Activated CD8-positive, alpha-beta memory T cell treated with anti-CD3 and anti-CD28 coated beads, Interleukin-2, amount 10 ng/mL, durations not matched to agents 7 days and 5 days (primary cell): ENCODE measurements at regions of chr16 and their contacts with region 1.

Region 1: GRCh38 chr16:81035398-81035974 is at the start of gene ATMIN:
- DNase-seq: peak; percentile 87
- ATAC-seq: peak; percentile 97
- H3K4me3 Mint-ChIP-seq: peak within 1 kb of the TSS; percentile 79
- H3K27ac Mint-ChIP-seq: peak within 1 kb of the TSS; percentile 65
- H3K4me1 Mint-ChIP-seq: peaks cover 20% of the 10 kb centered on the region
- H3K27me3 Mint-ChIP-seq: no peaks in the 10 kb centered on the region
- total RNA-seq, gene ATMIN: 20.9 to 27.5 TPM

Region 2: DNA sequence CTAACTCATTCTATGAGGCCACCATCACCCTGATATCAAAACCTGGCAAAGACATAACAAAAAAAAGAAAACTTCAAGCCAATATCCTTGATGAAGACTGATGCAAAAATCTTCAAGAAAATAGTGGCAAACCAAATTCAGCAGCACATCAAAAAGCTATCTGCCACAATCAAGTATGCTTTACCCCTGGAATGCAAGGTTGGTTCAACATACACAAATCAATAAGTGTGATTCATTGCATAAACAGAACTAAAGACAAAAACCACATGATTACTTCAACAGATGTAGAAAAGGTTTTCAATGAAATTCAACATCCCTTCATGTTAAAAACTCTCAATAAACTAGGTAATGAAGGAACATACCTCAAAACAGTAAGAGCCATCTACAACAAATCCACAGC is 77.2 kb before region 1 on chr16:
- CTCF ChIA-PET with region 1: no interaction called
- DNase-seq: no peak
- ATAC-seq: no peak
- H3K4me3 Mint-ChIP-seq: no peak overlapping the region
- H3K27ac Mint-ChIP-seq: no peak overlapping the region
- H3K4me1 Mint-ChIP-seq: no peaks in the 10 kb centered on the region
- H3K27me3 Mint-ChIP-seq: peaks cover 2% of the 10 kb centered on the region

Region 3: DNA sequence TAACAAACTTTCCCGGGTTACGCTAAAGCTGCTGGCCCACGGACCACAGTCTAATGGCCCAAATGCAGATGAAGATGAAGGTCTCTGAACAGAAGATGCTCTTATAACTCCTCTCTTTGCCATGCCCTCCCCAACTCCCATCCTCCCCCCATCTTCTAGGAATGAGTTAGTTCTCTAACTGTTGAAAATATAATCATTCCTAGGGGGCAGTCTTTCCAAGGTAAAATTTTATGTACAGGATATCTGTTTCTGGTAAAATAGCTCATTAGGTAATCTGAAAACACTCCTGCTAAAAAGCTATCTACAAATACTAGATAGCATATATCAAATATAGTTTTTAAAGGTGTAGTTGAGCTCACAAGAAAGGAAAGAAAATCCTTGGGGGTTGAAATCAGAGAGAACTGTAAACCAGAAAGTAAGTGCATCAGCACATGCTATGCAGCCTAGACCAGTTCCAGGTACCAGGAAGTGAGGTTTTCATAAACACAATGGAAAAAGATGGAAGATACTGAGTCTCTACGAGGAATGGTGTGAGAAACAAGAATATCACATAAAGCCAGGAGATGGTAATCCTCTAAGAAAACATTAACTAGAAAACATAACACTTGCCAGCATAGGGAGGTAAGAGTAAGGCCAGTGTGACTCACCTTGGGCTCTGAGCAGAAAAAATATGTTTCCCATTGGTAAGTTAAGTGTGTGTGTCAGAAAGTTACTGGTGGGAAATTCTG is 66.9 kb before region 1 on chr16:
- CTCF ChIA-PET with region 1: no interaction called
- DNase-seq: no peak
- ATAC-seq: no peak
- H3K4me3 Mint-ChIP-seq: no peak overlapping the region
- H3K27ac Mint-ChIP-seq: no peak overlapping the region
- H3K4me1 Mint-ChIP-seq: peaks cover 7% of the 10 kb centered on the region
- H3K27me3 Mint-ChIP-seq: no peaks in the 10 kb centered on the region

Region 4: GRCh38 chr16:80997139-80997798 is 38.2 kb before region 1 on chr16:
- CTCF ChIA-PET with region 1: interaction called, 54 read pairs
- DNase-seq: no peak
- ATAC-seq: peak; percentile 69
- H3K4me3 Mint-ChIP-seq: peak overlapping the region; percentile 79
- H3K27ac Mint-ChIP-seq: peak overlapping the region; percentile 95
- H3K4me1 Mint-ChIP-seq: peaks cover 67% of the 10 kb centered on the region
- H3K27me3 Mint-ChIP-seq: no peaks in the 10 kb centered on the region

Region 5: DNA sequence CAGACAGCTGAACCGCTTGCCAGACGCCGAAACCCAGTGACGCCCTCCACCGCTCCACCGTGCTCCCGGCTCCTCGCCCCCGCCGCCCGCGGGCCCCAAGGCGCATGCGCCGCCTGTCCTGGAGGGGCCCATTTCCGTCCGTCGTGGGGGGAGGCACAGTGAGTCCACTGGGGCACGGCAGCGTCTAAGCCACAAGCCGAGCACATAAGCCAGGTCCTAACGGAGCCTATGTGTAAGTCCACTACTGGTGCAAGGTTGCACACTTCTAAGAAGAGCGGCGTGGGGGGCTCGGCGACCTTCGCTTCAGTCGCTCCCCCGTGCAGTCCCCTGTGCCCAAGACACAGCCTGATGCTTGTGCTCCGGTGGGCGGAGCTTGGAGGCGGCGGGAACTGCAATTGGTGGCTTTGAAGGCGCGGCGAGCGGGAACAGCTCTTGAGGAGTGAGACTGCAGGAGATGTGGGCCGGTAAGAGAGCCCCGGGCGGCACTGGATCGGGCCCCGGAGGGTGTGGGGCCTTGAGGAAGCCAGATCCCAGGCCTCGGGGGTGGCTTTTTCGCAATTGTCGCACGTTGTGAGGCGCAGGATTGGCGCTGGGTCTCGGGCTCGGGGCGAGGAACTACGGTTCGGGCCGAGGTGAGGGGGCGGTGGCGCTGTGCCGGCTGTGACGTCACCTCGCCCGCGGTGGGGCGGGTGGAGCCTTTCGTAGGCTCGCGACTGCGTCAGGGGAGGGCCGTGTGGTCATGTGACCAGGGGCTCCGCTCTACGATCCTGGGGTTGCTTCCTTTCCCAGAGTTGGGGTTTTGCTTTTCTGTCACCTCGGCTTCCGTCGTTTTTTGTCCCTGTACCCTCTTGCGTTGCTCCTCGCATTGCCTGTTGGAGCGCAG is 28.4 kb before region 1 on chr16 and contains the starts of genes CENPN and CMC2:
- CTCF ChIA-PET with region 1: interaction called, 54 read pairs
- DNase-seq: peak; percentile 99
- ATAC-seq: peak; percentile 86
- H3K4me3 Mint-ChIP-seq: peak within 1 kb of the TSS; percentile 96
- H3K27ac Mint-ChIP-seq: peak within 1 kb of the TSS; percentile 100
- H3K4me1 Mint-ChIP-seq: peaks cover 50% of the 10 kb centered on the region
- H3K27me3 Mint-ChIP-seq: no peaks in the 10 kb centered on the region
- total RNA-seq, gene CENPN: 66.1 to 73.7 TPM
- total RNA-seq, gene CMC2: 93.3 to 136 TPM

Region 6: GRCh38 chr16:81018496-81018895 is 17.0 kb before region 1 on chr16:
- CTCF ChIA-PET with region 1: interaction called, 17 read pairs
- DNase-seq: no peak
- ATAC-seq: no peak
- H3K4me3 Mint-ChIP-seq: no peak overlapping the region
- H3K27ac Mint-ChIP-seq: peak overlapping the region; percentile 24
- H3K4me1 Mint-ChIP-seq: peaks cover 5% of the 10 kb centered on the region
- H3K27me3 Mint-ChIP-seq: no peaks in the 10 kb centered on the region

Region 7: DNA sequence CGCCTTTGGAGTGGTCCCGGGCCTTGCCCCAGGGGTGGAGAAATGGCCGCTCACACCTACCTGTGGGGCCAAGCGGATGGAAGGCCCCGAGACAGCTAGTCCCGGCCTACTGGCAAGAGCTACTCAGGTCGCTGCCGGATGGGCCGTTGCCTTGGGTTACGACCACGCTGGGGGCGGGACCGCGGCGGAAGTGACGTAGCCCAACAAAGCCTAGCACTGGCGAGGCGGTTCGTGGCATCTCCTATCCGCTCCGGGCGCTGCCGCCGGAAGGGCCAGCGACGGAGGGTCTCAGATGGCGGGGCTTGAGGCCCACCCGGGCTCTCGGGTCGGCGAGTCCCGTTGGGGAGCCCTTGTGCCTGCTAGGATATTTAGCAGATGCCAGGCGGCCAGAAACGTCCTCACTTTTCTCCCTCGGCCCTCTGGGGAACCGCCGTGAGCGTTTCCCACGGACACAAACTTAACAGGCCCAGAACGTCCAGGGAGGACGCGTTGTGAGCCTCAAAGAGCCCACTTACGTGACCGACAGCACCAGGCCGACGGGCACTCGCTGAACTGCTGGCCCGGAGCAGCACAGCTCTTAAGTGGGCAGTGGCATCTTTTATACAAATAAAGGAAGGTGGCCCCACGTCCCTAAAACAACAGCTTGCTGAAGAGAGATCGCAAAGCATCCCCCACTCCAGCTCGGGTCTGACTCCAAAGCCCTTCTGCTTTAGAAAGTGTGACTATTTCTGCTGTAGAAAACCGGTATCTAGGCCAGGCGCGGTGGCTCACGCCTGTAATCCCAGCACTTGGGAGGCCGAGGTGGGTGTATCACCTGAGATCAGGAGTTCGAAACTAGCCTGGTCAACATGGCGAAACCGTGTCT is 41.8 kb after region 1 on chr16 and contains the start of gene C16orf46:
- CTCF ChIA-PET with region 1: interaction called, 40 read pairs
- DNase-seq: peak; percentile 99
- ATAC-seq: peak; percentile 89
- H3K4me3 Mint-ChIP-seq: no peak within 1 kb of the TSS
- H3K27ac Mint-ChIP-seq: peak within 1 kb of the TSS; percentile 15
- H3K4me1 Mint-ChIP-seq: peaks cover 4% of the 10 kb centered on the region
- H3K27me3 Mint-ChIP-seq: peaks cover 4% of the 10 kb centered on the region
- total RNA-seq, gene C16orf46: not detected